Adrenal gland (tissue), 19 donors: ENCODE measurements at regions of chr3 and their contacts with region 1.

Region 1: DNA sequence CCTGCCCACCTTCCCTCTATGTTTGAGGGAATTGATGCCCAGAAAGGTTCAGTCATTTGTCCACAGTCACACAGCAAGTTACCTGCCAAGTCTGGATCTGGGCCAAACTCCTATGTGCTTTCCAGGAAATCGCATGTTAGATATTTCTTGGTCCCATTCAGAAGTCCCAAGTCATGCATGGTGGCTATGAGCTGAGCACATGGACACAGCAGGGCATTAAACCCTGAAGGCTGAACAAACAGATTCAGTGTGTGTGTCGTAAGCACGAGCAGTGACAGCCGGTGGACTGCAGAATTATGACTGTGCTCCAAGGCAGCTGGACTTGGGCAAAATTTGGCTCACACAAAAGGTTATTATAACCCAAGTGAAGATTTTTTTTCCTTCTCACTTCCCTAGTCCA is 11.4 kb upstream of the SLC6A6 start:
- DNase-seq: peak; percentile 68 to 95 (median 92)
- H3K4me3 ChIP-seq: no peak overlapping the region
- H3K27ac ChIP-seq: peak overlapping the region in 3 of 5 donors; percentile 13 to 45 (median 45)
- H3K4me1 ChIP-seq: peaks cover 10 to 11% of the 10 kb centered on the region in 2 donors
- H3K27me3 ChIP-seq: no peaks in the 10 kb centered on the region
- CTCF ChIP-seq: no peak
- POLR2A ChIP-seq: no peak

Region 2: DNA sequence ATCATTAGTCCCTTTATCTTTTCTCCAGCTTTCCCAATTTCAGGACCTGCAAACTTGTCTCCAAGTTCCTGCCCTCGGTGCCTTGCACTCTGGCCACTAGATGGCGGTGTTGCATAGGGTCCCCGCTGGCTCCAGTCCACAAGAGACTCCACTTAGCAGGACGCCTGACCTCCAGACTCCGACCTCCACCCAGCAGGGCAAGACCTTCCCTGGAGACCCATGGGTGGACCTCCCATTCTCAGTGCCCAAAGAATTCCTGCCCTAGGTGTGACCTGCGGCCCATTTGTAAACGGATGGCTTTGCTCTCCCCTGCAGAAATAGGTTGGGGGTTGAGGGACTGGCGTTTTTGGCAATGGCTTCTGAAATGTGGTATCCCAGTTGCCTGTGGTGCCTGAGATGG is 129.8 kb before region 1 on chr3:
- intact Hi-C with region 1: no loop called
- DNase-seq: peak; percentile 80 to 94 (median 86)
- H3K4me3 ChIP-seq: no peak overlapping the region
- H3K27ac ChIP-seq: no peak overlapping the region
- H3K4me1 ChIP-seq: no peaks in the 10 kb centered on the region
- H3K27me3 ChIP-seq: no peaks in the 10 kb centered on the region
- CTCF ChIP-seq: peak; percentile 92 to 98 (median 96)
- POLR2A ChIP-seq: no peak

Region 3: DNA sequence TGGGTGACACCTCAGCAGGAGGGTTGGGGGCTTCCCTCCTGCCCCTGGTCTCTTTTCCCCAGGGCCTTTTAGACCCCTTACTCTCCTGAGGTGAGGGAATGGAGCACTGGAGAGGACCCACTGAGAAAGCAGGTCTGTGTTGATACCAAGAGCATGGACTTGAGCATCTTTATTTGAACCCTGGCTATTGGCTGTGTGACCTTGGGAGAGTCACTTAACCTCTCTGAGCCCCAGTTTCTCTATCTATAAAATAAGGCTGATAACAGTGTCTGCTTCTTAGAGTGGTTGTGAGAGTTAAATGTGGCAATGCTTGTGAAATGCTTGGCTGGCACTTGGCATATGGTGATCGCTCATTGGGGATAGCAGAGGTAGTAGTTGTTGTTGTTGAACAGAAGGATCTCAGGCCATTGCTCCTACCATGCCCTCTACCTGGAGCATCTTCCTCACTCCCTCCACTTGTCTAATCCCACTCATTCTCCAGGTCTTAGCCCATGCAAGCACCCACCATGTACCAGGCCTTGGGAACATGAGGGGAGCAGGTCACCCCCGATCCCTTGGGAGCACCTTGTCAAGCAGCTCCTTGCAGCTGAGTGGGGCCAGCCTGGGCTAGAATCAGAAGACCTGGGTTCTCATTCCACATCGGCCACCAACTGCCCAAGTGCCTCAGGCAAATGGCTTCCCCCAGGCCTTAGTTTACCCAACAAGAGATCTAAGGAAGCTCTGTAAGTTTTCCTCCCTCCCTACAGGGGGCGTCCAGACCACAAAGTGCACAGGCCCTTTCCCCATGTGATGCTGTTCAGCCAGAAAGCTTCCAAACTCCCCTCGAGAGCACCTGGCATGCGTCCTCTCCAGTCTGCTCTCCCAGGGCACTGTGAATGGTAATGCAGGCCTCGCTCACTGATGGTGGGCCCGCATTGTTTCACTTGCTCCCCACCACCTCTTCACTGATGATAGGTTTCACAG is 115.8 kb before region 1 on chr3:
- intact Hi-C with region 1: loop called in 1 of 2 experiments (anchors 10 kb)
- DNase-seq: no peak
- H3K4me3 ChIP-seq: no peak overlapping the region
- H3K27ac ChIP-seq: no peak overlapping the region
- H3K4me1 ChIP-seq: no peaks in the 10 kb centered on the region
- H3K27me3 ChIP-seq: no peaks in the 10 kb centered on the region
- CTCF ChIP-seq: peak in 3 of 6 experiments; percentile 18 to 27 (median 20)
- POLR2A ChIP-seq: no peak

Region 4: GRCh38 chr3:14497321-14497720 is 106.3 kb after region 1 on chr3:
- intact Hi-C with region 1: no loop called
- DNase-seq: no peak
- H3K4me3 ChIP-seq: no peak overlapping the region
- H3K27ac ChIP-seq: no peak overlapping the region
- H3K4me1 ChIP-seq: no peaks in the 10 kb centered on the region
- H3K27me3 ChIP-seq: no peaks in the 10 kb centered on the region
- CTCF ChIP-seq: no peak
- POLR2A ChIP-seq: no peak